Posterior vena cava (tissue), 2 donors: ENCODE measurements at regions of chr1 and their contacts with region 1.

Region 1: GRCh38 chr1:12453400-12454343 is 164.3 kb downstream of the DHRS3 start:
- DNase-seq: no peak

Region 2: GRCh38 chr1:12078938-12079861 is 374.5 kb before region 1 on chr1:
- intact Hi-C with region 1: no loop called
- DNase-seq: peak; percentile 55

Region 3: DNA sequence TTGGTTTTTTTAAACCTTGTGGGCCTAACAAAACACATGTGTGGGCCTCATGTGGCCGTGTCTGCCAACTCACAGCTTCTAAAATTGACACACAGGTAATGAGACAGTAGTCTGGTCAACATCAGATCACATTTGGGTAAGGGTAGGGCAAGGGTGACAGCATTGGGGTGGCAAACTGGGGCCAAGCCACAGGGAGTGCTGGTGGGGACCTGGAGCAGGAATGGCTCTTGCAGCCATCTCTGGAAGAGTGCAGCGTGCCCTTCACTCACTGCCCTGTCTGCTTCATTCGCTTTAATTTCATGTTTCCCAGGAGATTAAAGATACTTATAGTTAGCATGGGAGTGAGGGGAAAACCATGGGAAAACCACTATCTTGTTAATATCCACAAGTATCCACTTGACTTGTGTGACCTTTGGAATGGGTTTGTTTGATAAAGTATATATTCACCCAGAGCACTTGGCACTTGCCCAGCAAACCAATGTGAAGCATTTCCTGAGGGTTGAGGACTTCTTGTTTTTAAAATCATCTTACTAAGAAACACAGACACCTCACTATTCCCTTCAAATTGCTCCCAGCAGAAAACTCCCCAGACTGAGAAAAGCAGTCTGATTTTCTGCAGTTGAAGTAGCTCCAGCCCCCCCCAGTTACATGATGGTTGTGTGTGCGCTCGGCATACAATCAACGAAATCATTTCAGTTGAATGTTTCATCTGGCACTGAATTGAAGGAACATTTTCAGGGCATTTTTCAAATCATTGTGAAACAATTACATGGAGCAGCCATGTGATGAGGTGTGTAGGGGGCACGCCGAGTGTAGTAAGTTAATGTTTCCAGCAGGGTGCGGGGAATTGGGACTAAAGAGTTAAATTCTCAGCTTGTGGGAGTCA is 48.1 kb before region 1 on chr1:
- intact Hi-C with region 1: loop called in 1 of 2 experiments (anchors 1 kb)
- DNase-seq: no peak